H1 (cell line): ENCODE measurements at regions of chr1 and their contacts with region 1.

Region 1: DNA sequence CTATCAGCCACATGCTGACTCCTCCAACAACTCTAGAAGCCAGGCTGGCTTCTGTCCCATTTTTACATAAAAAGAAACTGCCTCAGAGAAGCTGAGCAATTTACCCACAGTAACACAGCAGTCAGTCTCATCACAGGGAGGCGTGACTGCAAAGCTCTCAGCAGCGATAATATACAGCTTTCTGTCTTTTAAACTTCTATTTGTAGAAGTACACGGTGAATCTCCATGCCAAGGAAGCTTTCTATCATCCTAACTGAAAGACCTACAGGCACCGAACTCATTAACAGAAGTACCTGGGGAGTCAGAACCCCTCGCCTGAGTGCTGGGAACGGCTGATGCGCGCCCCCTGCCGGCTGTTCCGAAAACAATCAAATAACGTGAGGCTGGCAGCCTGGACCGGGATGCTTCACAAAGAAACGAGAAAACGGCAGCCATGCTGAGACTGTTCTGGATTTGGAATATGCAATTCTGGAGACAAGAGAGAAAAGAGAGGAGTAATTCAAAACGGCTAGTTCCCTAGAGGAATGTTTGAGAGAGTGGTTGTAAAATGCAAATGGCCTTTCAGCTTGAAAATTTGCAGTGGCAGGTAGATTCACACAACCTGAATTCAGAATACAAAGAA is 43.5 kb upstream of the RAB4A start:
- DNase-seq: peak in 1 of 2 experiments; percentile 95
- H3K4me3 ChIP-seq: no peak overlapping the region
- H3K27ac ChIP-seq: no peak overlapping the region
- H3K4me1 ChIP-seq: peaks cover 22 to 43% (median 31%) of the 10 kb centered on the region in 4 experiments
- H3K27me3 ChIP-seq: no peaks in the 10 kb centered on the region
- CTCF ChIP-seq: peak; percentile 81 to 85 (median 83)
- EP300 ChIP-seq: no peak; a peak in 1 of 3 replicates
- POLR2A ChIP-seq: no peak
- RAD21 ChIP-seq: peak; percentile 94 to 96

Region 2: GRCh38 chr1:228664399-228664914 is 563.0 kb before region 1 on chr1:
- CTCF ChIA-PET with region 1: interaction called, 11 read pairs
- POLR2A ChIA-PET with region 1: no interaction called
- DNase-seq: peak; percentile 53 to 91
- H3K4me3 ChIP-seq: no peak overlapping the region
- H3K27ac ChIP-seq: no peak overlapping the region
- H3K4me1 ChIP-seq: peaks cover 0 to 2% (median 0%) of the 10 kb centered on the region in 4 experiments; a peak in 1 of 7 replicates
- H3K27me3 ChIP-seq: no peaks in the 10 kb centered on the region
- CTCF ChIP-seq: peak; percentile 34 to 71 (median 64)
- EP300 ChIP-seq: no peak
- POLR2A ChIP-seq: no peak
- RAD21 ChIP-seq: peak; percentile 90 to 94

Region 3: DNA sequence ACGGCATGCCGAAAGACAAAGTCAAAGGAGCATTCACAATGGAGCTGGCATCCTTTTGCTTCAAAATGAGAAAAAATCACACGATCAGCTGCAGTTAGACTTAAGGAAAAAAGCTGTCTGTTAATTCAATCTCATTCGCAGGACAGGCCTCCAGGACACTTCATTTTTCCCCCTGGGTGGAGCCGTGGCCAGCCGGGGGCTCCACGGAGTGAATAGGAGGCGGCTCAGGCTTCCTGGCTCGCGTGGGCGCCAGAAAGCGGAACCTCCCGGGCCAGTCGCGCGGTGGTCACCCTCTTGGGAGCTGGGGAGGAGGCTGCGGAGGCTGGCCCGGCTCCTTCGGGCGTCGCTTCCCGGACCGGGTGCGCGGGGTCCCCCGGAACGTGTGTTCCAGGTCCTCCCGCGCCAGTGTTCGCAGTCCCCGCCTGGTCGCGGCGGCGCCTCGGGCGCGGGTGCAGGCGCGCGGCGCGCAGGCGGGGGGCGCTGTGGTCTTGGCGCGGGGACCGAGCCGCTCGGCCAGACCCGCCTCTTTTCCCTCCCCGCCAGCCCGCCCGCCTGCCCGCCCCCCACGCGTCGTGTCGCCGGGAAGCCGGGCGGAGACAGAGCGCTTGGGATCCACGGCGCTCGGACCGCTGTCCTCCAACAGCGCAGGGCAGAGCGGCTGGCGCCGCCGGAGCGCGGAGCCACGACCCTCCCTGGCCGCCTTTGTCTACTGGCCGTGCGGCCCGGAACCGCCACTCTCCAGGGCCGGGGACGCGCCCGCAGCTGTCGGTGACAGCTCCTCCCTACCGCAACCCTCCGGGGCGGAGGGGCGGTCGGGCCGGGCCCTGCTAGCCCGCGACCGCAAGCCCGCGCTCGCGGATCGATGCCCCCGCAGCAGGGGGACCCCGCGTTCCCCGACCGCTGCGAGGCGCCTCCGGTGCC is 492.3 kb before region 1 on chr1 and contains the start of gene RHOU:
- CTCF ChIA-PET with region 1: interaction called, 10 read pairs
- POLR2A ChIA-PET with region 1: no interaction called
- DNase-seq: peak in 1 of 2 experiments; percentile 79
- H3K4me3 ChIP-seq: peak within 1 kb of the TSS; percentile 50 to 66 (median 58)
- H3K27ac ChIP-seq: no peak within 1 kb of the TSS
- H3K4me1 ChIP-seq: peaks cover 0 to 3% (median 1%) of the 10 kb centered on the region in 4 experiments; a peak in 3 of 7 replicates
- H3K27me3 ChIP-seq: peaks cover 0 to 25% (median 11%) of the 10 kb centered on the region in 4 experiments; a peak in 5 of 7 replicates
- CTCF ChIP-seq: peak; percentile 44 to 77 (median 49); a peak in 3 of 4 replicates
- EP300 ChIP-seq: no peak
- POLR2A ChIP-seq: no peak
- RAD21 ChIP-seq: peak; percentile 42 to 68
- total RNA-seq, gene RHOU: 3.4 and 3.5 TPM in 2 replicates

Region 4: GRCh38 chr1:228986093-228986904 is 241.1 kb before region 1 on chr1:
- CTCF ChIA-PET with region 1: interaction called, 13 read pairs
- POLR2A ChIA-PET with region 1: no interaction called
- DNase-seq: no peak
- H3K4me3 ChIP-seq: no peak overlapping the region
- H3K27ac ChIP-seq: no peak overlapping the region; the same call in 1 of the 2 replicates
- H3K4me1 ChIP-seq: peaks cover 0 to 6% (median 2%) of the 10 kb centered on the region in 4 experiments; a peak in 5 of 7 replicates
- H3K27me3 ChIP-seq: no peaks in the 10 kb centered on the region; a peak in 1 of 7 replicates
- CTCF ChIP-seq: peak in 2 of 3 experiments; percentile 24 to 29; a peak in 3 of 4 replicates
- EP300 ChIP-seq: no peak
- POLR2A ChIP-seq: no peak
- RAD21 ChIP-seq: peak in 1 of 2 experiments; percentile 44; a peak in 3 of 4 replicates

Region 5: GRCh38 chr1:229139331-229140118 is 87.9 kb before region 1 on chr1:
- CTCF ChIA-PET with region 1: interaction called, 13 read pairs
- POLR2A ChIA-PET with region 1: no interaction called
- DNase-seq: no peak
- H3K4me3 ChIP-seq: no peak overlapping the region
- H3K27ac ChIP-seq: no peak overlapping the region
- H3K4me1 ChIP-seq: no peaks in the 10 kb centered on the region
- H3K27me3 ChIP-seq: no peaks in the 10 kb centered on the region; a peak in 1 of 7 replicates
- CTCF ChIP-seq: no peak
- EP300 ChIP-seq: no peak
- POLR2A ChIP-seq: no peak
- RAD21 ChIP-seq: no peak

Region 6: DNA sequence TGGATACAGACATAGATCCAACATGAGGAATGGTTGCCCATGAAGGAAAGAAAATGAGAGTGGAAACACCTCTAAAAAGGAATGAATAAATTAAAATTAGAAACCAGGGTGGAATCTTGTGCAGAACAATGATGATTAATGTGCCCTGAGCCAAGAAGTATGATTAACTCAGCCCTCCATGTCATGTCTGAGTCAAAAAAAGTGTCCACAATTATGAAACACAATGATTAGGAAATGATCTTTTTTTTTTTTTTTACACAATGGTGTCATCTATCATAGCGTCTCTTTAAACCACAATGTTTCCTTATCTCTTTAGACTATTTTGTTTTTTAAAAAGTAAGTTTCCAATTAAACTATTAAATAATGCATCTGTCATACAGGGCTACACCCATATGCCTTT is 35.4 kb before region 1 on chr1:
- CTCF ChIA-PET with region 1: interaction called, 12 read pairs
- POLR2A ChIA-PET with region 1: no interaction called
- DNase-seq: no peak
- H3K4me3 ChIP-seq: no peak overlapping the region
- H3K27ac ChIP-seq: no peak overlapping the region
- H3K4me1 ChIP-seq: peaks cover 0 to 11% (median 7%) of the 10 kb centered on the region in 4 experiments; a peak in 4 of 7 replicates
- H3K27me3 ChIP-seq: no peaks in the 10 kb centered on the region
- CTCF ChIP-seq: no peak
- EP300 ChIP-seq: no peak
- POLR2A ChIP-seq: no peak
- RAD21 ChIP-seq: no peak

Region 7: DNA sequence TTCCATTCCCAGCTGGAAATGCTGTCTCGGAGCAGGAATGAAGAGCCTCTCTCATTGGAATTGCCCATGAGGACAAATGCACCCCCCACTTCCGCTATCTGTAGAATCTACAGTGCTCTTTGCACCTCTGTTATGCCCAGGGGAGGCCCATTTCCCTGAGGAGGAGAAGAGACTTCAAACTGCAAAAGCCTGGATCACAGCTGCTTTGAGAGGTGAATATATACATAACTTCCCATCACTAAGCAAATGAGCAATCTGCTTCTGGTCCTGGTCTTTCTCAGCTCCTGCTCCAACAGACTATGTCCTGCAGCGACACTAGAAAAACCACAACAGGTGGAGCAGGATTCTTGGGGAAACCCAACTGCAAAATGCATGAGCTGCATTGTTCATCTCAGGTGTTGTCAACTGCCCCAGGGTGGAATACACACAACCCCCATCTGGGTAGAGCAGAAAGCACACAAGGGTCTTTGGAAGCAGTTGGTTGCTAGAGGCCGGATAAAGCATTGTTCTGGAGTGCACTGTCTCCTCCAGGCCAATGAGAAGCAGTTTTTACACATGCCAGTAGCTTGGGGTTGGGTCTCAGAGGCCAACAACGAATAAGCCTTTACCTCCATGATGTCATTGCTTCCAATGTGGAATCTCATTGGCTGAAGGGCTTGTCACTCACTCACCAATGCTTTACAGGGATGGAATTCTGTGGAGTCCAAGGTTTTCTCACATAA is 24.2 kb before region 1 on chr1:
- CTCF ChIA-PET with region 1: interaction called, 42 read pairs
- POLR2A ChIA-PET with region 1: interaction called, 4 read pairs
- DNase-seq: peak; percentile 47 to 82
- H3K4me3 ChIP-seq: no peak overlapping the region
- H3K27ac ChIP-seq: no peak overlapping the region
- H3K4me1 ChIP-seq: peaks cover 6 to 22% (median 12%) of the 10 kb centered on the region in 4 experiments
- H3K27me3 ChIP-seq: no peaks in the 10 kb centered on the region
- CTCF ChIP-seq: no peak
- EP300 ChIP-seq: no peak
- POLR2A ChIP-seq: no peak
- RAD21 ChIP-seq: no peak